PC-9 (cell line): ENCODE measurements at regions of chr14 and their contacts with region 1.

Region 1: DNA sequence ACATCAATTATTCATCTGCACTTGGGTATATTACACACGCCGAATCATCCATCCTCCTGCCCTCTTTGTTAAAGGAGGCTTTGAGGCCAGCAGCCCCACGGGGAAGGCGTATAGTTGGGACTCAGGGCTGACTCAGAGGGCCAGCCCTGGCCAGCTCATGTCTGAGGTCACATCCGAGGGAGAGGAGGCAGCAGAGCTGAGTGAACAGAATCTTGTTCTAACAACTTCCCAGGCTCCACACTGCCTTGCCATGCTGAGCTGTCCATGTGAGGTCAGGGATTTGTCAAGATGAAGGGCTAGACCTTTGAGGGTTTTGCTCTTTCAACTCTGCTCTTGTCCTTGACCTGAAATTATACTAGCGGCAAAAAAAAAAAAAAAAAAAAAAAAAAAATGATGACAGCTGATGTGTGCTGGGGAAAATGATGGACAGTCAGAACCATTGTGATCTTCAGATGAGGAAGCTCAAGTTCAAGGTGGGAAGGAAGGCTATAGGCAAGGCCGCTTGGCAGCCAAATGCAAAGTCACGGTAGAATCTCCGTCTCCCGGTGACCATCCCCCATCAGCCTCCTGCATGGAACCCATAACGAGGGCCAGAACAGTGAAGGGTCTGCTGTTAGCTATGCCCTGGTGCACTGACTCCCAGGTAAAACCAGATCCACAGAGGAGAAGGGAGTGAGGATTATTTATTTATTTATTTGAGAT is 12.5 kb upstream of the MARK3 start:
- DNase-seq: peak; percentile 87 to 96
- H3K4me3 ChIP-seq: no peak overlapping the region
- H3K27ac ChIP-seq: peak overlapping the region; percentile 63
- H3K4me1 ChIP-seq: peaks cover 27% of the 10 kb centered on the region
- H3K27me3 ChIP-seq: no peaks in the 10 kb centered on the region
- CTCF ChIP-seq: no peak

Region 2: DNA sequence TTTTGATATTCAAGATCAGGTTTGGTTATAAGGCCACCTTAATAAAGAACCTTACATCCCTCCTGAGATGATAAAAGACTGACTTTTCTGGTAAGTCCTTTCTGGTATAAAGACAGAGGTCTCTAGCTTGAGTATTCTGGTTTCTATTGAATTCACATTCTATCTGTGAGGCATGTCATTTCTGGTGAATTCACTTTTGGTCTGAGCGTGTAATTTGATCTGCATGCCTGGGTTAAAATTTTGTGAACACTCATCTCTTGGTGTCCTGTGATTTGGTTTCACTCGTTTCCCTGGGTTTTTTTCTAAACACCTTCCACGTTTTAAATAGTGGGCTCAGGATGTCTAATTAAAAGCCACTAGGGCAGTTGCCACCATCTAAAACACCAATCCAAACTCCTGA is 26.5 kb before region 1 on chr14:
- CTCF ChIA-PET with region 1: no interaction called
- POLR2A ChIA-PET with region 1: interaction called, 15 read pairs
- intact Hi-C with region 1: no loop called
- DNase-seq: no peak
- H3K4me3 ChIP-seq: no peak overlapping the region
- H3K27ac ChIP-seq: peak overlapping the region; percentile 18
- H3K4me1 ChIP-seq: peaks cover 6% of the 10 kb centered on the region; the same call in 1 of the 2 replicates
- H3K27me3 ChIP-seq: no peaks in the 10 kb centered on the region
- CTCF ChIP-seq: no peak